CD8-positive, alpha-beta T cell (primary cell): ENCODE measurements at regions of chr12 and their contacts with region 1.

Region 1: GRCh38 chr12:98397316-98398105 is 117.9 kb upstream of the TMPO start:
- DNase-seq: peak; percentile 57 to 88 (median 79)
- ATAC-seq: peak; percentile 92
- H3K4me3 ChIP-seq: peak overlapping the region; percentile 33 to 47
- H3K4me3 Mint-ChIP-seq: peak overlapping the region; percentile 85
- H3K27ac ChIP-seq: peak overlapping the region in 1 of 2 experiments; percentile 44
- H3K27ac Mint-ChIP-seq: peak overlapping the region; percentile 49
- H3K4me1 ChIP-seq: peaks cover 12% of the 10 kb centered on the region
- H3K4me1 Mint-ChIP-seq: peaks cover 21% of the 10 kb centered on the region
- H3K27me3 ChIP-seq: no peaks in the 10 kb centered on the region
- H3K27me3 Mint-ChIP-seq: no peaks in the 10 kb centered on the region
- CTCF ChIP-seq: peak; percentile 94

Region 2: GRCh38 chr12:97148941-97149559 is 1248.5 kb before region 1 on chr12:
- CTCF ChIA-PET with region 1: interaction called, 6 read pairs
- POLR2A ChIA-PET with region 1: no interaction called
- intact Hi-C with region 1: loop called (anchors 1 kb)
- DNase-seq: peak; percentile 1 to 49 (median 27)
- ATAC-seq: peak; percentile 46
- H3K4me3 ChIP-seq: no peak overlapping the region
- H3K4me3 Mint-ChIP-seq: no peak overlapping the region
- H3K27ac ChIP-seq: no peak overlapping the region
- H3K27ac Mint-ChIP-seq: no peak overlapping the region
- H3K4me1 ChIP-seq: no peaks in the 10 kb centered on the region
- H3K4me1 Mint-ChIP-seq: no peaks in the 10 kb centered on the region
- H3K27me3 ChIP-seq: peaks cover 0 to 6% of the 10 kb centered on the region in 2 experiments
- H3K27me3 Mint-ChIP-seq: peaks cover 11% of the 10 kb centered on the region
- CTCF ChIP-seq: no peak

Region 3: DNA sequence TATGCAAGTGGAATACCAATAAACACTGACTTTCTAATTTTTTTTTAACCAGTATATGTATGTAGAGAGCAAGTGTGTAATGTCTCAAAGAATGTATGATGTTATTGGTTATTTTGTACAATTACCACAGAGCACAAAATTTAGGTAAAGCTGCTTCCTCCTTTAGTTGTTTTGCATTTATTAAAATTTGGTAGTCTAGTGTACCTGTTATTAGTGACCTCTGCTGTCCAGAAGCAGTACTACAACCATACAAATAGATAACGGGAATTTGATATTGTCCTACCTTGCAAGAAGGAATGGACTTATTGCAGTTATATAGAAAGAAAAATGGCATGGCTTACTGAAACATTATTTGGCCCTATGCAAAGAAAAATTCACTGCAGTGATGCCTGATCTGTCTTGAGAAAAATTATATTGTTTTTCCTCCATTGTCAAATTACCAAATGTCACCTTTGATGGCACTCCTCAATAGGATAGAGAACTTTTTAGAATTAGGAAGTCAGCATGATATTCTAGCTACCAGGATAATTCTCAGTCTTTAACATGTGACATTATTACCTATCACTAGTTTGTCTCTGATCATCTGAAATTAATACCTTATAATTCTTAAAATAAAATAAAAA is 1088.8 kb before region 1 on chr12:
- CTCF ChIA-PET with region 1: no interaction called
- POLR2A ChIA-PET with region 1: no interaction called
- intact Hi-C with region 1: loop called (anchors 1 to 2 kb)
- DNase-seq: peak in 3 of 9 experiments; percentile 16 to 71 (median 64)
- ATAC-seq: peak; percentile 56
- H3K4me3 ChIP-seq: no peak overlapping the region
- H3K4me3 Mint-ChIP-seq: no peak overlapping the region
- H3K27ac ChIP-seq: no peak overlapping the region
- H3K27ac Mint-ChIP-seq: no peak overlapping the region
- H3K4me1 ChIP-seq: no peaks in the 10 kb centered on the region
- H3K4me1 Mint-ChIP-seq: no peaks in the 10 kb centered on the region
- H3K27me3 ChIP-seq: no peaks in the 10 kb centered on the region
- H3K27me3 Mint-ChIP-seq: peaks cover 13% of the 10 kb centered on the region
- CTCF ChIP-seq: peak; percentile 91